ENCODE measurements at regions of chr7 and their contacts with region 1.

Region 1: GRCh38 chr7:43834463-43835251 is 34.7 kb downstream of the MRPS24 start:
- DNase-seq: no peak
- H3K4me3 ChIP-seq: no peak overlapping the region
- CTCF ChIP-seq: no peak

Region 2: GRCh38 chr7:43721193-43721806 is 113.4 kb before region 1 on chr7:
- CTCF ChIA-PET with region 1: interaction called, 68 read pairs
- POLR2A ChIA-PET with region 1: no interaction called
- DNase-seq: no peak
- H3K4me3 ChIP-seq: no peak overlapping the region
- CTCF ChIP-seq: no peak

Region 3: DNA sequence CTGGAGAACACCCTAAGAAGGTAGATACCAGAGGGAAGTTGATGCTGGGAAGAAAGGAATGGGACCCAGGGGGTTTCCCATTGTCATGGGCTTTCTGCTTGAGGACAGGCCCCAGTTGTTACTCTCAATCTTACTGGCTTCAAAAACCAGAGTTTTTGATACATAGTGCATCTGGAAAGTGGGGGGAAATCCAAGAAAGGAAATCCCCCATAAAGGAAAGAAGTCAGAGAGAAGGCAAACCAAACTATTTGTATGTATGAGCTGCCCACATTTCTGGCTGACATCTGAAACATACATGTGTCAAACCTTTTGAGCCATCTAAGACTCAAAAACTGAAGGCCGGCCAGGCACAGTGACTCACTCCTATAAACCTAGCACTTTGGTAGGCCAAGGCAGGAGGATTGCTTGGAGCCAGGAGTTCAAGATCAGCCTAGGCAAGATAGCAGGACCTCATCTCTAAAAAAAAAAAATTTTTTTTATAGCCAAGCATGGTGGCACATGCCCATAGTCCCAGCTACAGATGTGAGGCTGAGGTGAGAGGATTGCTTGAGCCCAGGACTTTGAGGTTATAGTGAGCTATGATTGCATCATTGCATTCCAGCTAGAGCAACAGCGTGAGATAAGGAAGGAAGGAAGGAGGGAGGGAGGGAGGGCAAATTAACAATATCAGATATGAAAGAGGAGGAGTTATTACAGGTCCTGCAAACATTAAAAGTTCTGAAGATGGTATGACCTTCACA is 98.7 kb before region 1 on chr7:
- CTCF ChIA-PET with region 1: interaction called, 37 read pairs
- POLR2A ChIA-PET with region 1: no interaction called
- DNase-seq: no peak
- H3K4me3 ChIP-seq: no peak overlapping the region
- CTCF ChIP-seq: no peak

Region 4: DNA sequence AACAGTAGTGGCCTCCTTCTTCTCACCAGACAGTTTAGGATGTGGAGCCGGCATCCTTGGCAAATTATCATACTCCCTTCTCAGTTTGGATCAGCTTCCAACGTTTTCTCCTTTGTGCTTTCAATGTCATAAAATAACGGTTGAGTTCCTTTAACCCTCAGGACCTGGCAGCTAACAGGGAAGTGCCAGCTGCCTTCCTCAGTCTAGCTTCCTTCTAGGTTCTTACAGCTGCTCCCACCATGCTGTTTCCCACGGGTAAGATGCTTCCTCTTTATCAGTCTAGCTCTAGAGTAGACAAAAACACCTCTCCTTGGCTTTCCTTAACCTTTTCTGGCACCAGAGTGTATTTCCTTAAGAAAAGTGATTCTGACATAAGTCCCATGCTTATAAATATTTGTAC is 43.0 kb before region 1 on chr7:
- CTCF ChIA-PET with region 1: interaction called, 12 read pairs
- POLR2A ChIA-PET with region 1: no interaction called
- DNase-seq: no peak
- H3K4me3 ChIP-seq: no peak overlapping the region
- CTCF ChIP-seq: no peak

Region 5: GRCh38 chr7:43856996-43857395 is 22.3 kb after region 1 on chr7:
- CTCF ChIA-PET with region 1: interaction called, 17 read pairs
- POLR2A ChIA-PET with region 1: no interaction called
- DNase-seq: no peak
- H3K4me3 ChIP-seq: no peak overlapping the region
- CTCF ChIP-seq: no peak

Region 6: DNA sequence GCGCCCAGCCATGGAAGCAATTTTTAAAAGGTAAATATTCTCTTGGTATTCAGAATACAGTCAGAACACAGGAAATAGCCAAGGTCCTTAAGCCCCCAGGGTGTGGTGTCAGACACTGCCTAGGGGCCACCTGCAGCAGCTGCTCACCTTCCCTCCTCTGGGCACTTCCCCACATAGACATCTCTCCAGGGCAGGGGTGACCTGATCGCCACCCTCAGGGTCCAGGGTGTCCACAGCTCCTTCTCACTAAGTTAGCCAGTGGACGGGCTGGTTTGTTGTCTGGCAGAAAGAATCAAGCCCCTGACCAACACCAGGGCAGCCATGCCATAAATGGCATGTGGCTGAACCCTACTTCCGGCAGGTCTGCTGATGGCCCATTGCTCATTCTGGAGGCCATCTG is 55.8 kb after region 1 on chr7:
- CTCF ChIA-PET with region 1: no interaction called
- POLR2A ChIA-PET with region 1: no interaction called
- DNase-seq: no peak
- H3K4me3 ChIP-seq: no peak overlapping the region
- CTCF ChIP-seq: no peak

Region 7: GRCh38 chr7:43905956-43906330 is 71.3 kb after region 1 on chr7:
- CTCF ChIA-PET with region 1: no interaction called
- POLR2A ChIA-PET with region 1: no interaction called
- DNase-seq: no peak
- H3K4me3 ChIP-seq: peak overlapping the region; percentile 71
- CTCF ChIP-seq: no peak

Region 8: GRCh38 chr7:44196450-44196872 is 361.8 kb after region 1 on chr7:
- CTCF ChIA-PET with region 1: no interaction called
- POLR2A ChIA-PET with region 1: no interaction called
- DNase-seq: no peak
- H3K4me3 ChIP-seq: no peak overlapping the region
- CTCF ChIP-seq: peak; percentile 83

Measured in AG04449 (cell line).